ENCODE measurements at regions of chr2 and their contacts with region 1.

Region 1: DNA sequence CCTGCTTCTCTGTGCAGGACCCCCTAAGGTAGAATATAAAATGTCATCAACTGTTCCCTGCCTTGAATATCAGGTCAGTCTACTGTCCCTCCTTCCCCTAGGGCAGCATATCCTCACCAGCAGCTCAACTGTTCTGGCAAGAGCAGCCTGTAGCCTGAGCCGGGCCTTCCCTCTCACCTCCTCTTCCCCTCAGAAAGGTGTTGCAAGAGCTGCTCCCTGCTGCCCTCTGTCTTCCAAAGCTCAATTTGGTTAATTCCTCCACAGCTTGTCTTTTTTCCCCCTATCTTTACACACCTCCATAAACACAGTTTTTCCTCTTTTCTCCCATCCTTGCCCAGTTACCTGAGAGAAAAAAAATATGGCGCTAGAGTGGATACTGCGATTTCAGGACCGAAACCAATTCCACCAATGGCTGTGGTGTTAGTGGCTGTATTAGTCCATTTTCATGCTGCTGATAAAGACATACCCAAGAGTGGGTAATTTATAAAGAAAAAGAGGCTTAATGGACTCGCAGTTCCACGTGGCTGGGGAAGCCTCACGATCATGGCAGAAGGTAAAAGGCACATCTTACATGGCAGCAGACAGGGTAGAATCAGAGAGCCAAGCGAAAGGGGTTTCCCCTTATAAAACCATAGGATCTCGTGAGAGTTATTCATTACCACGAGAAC is 184.7 kb downstream of the MREG start:
- DNase-seq: peak; percentile 78
- ATAC-seq: peak; percentile 99
- H3K4me3 Mint-ChIP-seq: no peak overlapping the region
- H3K27ac Mint-ChIP-seq: no peak overlapping the region
- H3K4me1 Mint-ChIP-seq: peaks cover 23% of the 10 kb centered on the region
- H3K27me3 Mint-ChIP-seq: no peaks in the 10 kb centered on the region
- CTCF ChIP-seq: peak; percentile 42

Region 2: GRCh38 chr2:215793747-215794595 is 34.7 kb before region 1 on chr2:
- CTCF ChIA-PET with region 1: interaction called, 54 read pairs
- POLR2A ChIA-PET with region 1: no interaction called
- DNase-seq: no peak
- ATAC-seq: no peak
- H3K4me3 Mint-ChIP-seq: no peak overlapping the region
- H3K27ac Mint-ChIP-seq: no peak overlapping the region
- H3K4me1 Mint-ChIP-seq: peaks cover 60% of the 10 kb centered on the region
- H3K27me3 Mint-ChIP-seq: no peaks in the 10 kb centered on the region
- CTCF ChIP-seq: no peak

Region 3: GRCh38 chr2:215808996-215809395 is 19.7 kb before region 1 on chr2:
- CTCF ChIA-PET with region 1: interaction called, 29 read pairs
- POLR2A ChIA-PET with region 1: no interaction called
- DNase-seq: no peak
- ATAC-seq: peak; percentile 60
- H3K4me3 Mint-ChIP-seq: no peak overlapping the region
- H3K27ac Mint-ChIP-seq: no peak overlapping the region
- H3K4me1 Mint-ChIP-seq: peaks cover 19% of the 10 kb centered on the region
- H3K27me3 Mint-ChIP-seq: no peaks in the 10 kb centered on the region
- CTCF ChIP-seq: no peak

Region 4: GRCh38 chr2:215816424-215816823 is 12.2 kb before region 1 on chr2:
- CTCF ChIA-PET with region 1: interaction called, 12 read pairs
- POLR2A ChIA-PET with region 1: no interaction called
- DNase-seq: no peak
- ATAC-seq: no peak
- H3K4me3 Mint-ChIP-seq: no peak overlapping the region
- H3K27ac Mint-ChIP-seq: no peak overlapping the region
- H3K4me1 Mint-ChIP-seq: 0 out of 2 replicates have a peak, but pooled peaks cover 5% of the 10 kb centered on the region
- H3K27me3 Mint-ChIP-seq: no peaks in the 10 kb centered on the region; the same call in 1 of the 2 replicates
- CTCF ChIP-seq: no peak

Region 5: GRCh38 chr2:215841175-215841816 is 12.6 kb after region 1 on chr2:
- CTCF ChIA-PET with region 1: interaction called, 53 read pairs
- POLR2A ChIA-PET with region 1: no interaction called
- DNase-seq: no peak
- ATAC-seq: no peak
- H3K4me3 Mint-ChIP-seq: no peak overlapping the region
- H3K27ac Mint-ChIP-seq: no peak overlapping the region
- H3K4me1 Mint-ChIP-seq: peaks cover 6% of the 10 kb centered on the region
- H3K27me3 Mint-ChIP-seq: no peaks in the 10 kb centered on the region
- CTCF ChIP-seq: no peak

Region 6: GRCh38 chr2:215931256-215931903 is 102.7 kb after region 1 on chr2:
- CTCF ChIA-PET with region 1: interaction called, 16 read pairs
- POLR2A ChIA-PET with region 1: no interaction called
- DNase-seq: peak; percentile 67
- ATAC-seq: peak; percentile 65
- H3K4me3 Mint-ChIP-seq: no peak overlapping the region
- H3K27ac Mint-ChIP-seq: no peak overlapping the region
- H3K4me1 Mint-ChIP-seq: peaks cover 41% of the 10 kb centered on the region
- H3K27me3 Mint-ChIP-seq: no peaks in the 10 kb centered on the region; the same call in 1 of the 2 replicates
- CTCF ChIP-seq: peak; percentile 70

Measured in WTC11 (cell line).